GM12878 (cell line): ENCODE measurements at regions of chr7 and their contacts with region 1.

Region 1: GRCh38 chr7:129343099-129343700 is 91.0 kb upstream of the STRIP2 start:
- DNase-seq: no peak
- ATAC-seq: peak; percentile 84
- H3K4me3 ChIP-seq: no peak overlapping the region
- H3K27ac ChIP-seq: no peak overlapping the region
- H3K4me1 ChIP-seq: peaks cover 20% of the 10 kb centered on the region
- H3K27me3 ChIP-seq: no peaks in the 10 kb centered on the region
- CTCF ChIP-seq: peak; percentile 64 to 67 (median 65)
- EP300 ChIP-seq: no peak
- POLR2A ChIP-seq: no peak
- RAD21 ChIP-seq: peak; percentile 80

Region 2: GRCh38 chr7:129271500-129272355 is 71.5 kb before region 1 on chr7:
- CTCF ChIA-PET with region 1: no interaction called
- POLR2A ChIA-PET with region 1: no interaction called
- RAD21 ChIA-PET with region 1: no interaction called
- SMC1A ChIA-PET with region 1: no interaction called
- in situ Hi-C with region 1: no loop called
- intact Hi-C with region 1: no loop called
- DNase-seq: peak; percentile 21
- ATAC-seq: peak; percentile 98
- H3K4me3 ChIP-seq: no peak overlapping the region
- H3K27ac ChIP-seq: no peak overlapping the region
- H3K4me1 ChIP-seq: peaks cover 6% of the 10 kb centered on the region; the same call in 1 of the 2 replicates
- H3K27me3 ChIP-seq: no peaks in the 10 kb centered on the region
- CTCF ChIP-seq: peak; percentile 73 to 83 (median 74)
- EP300 ChIP-seq: no peak
- POLR2A ChIP-seq: no peak
- RAD21 ChIP-seq: peak; percentile 85

Region 3: GRCh38 chr7:129359638-129360037 is 16.4 kb after region 1 on chr7:
- CTCF ChIA-PET with region 1: interaction called, 27 read pairs
- POLR2A ChIA-PET with region 1: interaction called, 3 read pairs
- RAD21 ChIA-PET with region 1: interaction called, 22 read pairs
- SMC1A ChIA-PET with region 1: interaction called, 40 read pairs
- in situ Hi-C with region 1: no loop called
- intact Hi-C with region 1: no loop called
- DNase-seq: no peak
- ATAC-seq: no peak
- H3K4me3 ChIP-seq: no peak overlapping the region
- H3K27ac ChIP-seq: no peak overlapping the region
- H3K4me1 ChIP-seq: no peaks in the 10 kb centered on the region; the same call in none of the 2 replicates
- H3K27me3 ChIP-seq: no peaks in the 10 kb centered on the region
- CTCF ChIP-seq: no peak
- EP300 ChIP-seq: no peak
- POLR2A ChIP-seq: no peak
- RAD21 ChIP-seq: no peak

Region 4: GRCh38 chr7:129401967-129402860 is 59.0 kb after region 1 on chr7:
- CTCF ChIA-PET with region 1: interaction called, 14 read pairs
- POLR2A ChIA-PET with region 1: no interaction called
- RAD21 ChIA-PET with region 1: interaction called, 12 read pairs
- SMC1A ChIA-PET with region 1: interaction called, 9 read pairs
- in situ Hi-C with region 1: no loop called
- intact Hi-C with region 1: no loop called
- DNase-seq: peak; percentile 43
- ATAC-seq: peak; percentile 93
- H3K4me3 ChIP-seq: no peak overlapping the region
- H3K27ac ChIP-seq: peak overlapping the region; percentile 18; the same call in 1 of the 2 replicates
- H3K4me1 ChIP-seq: no peaks in the 10 kb centered on the region
- H3K27me3 ChIP-seq: no peaks in the 10 kb centered on the region
- CTCF ChIP-seq: peak; percentile 34 to 64 (median 37); a peak in 4 of 6 replicates
- EP300 ChIP-seq: peak; percentile 29 to 59; a peak in 2 of 4 replicates
- POLR2A ChIP-seq: no peak
- RAD21 ChIP-seq: peak; percentile 46

Region 5: DNA sequence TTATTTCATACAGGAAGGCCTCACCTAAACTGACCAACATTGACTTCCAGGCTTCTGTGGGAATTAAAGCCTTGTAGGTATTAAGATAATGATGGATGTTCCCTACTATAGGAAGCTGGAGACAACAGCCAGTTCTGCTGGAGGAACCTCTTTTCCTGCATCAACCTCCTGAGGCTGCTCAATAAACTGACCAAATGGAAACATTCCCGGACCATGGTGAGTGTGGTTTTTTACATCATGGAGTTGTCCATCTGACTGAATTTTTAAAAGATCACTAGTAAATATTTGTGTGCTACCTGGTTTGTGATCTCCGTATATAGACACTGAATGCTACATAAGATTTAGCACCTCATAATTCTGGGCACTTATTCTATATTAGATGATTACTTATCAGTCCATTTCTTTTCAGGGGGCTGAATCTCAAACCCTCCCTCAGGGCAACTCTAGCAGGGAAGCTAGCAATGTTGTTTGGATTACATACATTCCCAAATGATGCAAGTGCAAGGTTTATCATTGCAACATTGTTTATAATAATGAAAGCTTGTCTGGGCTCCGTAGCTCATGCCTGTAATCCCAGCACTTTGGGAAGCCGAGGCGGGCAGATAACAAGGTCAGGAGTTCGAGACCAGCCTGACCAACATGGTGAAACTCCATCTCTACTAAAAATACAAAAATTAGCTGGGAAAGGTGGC is 137.6 kb after region 1 on chr7:
- CTCF ChIA-PET with region 1: interaction called, 10 read pairs
- POLR2A ChIA-PET with region 1: no interaction called
- RAD21 ChIA-PET with region 1: interaction called, 4 read pairs
- SMC1A ChIA-PET with region 1: interaction called, 5 read pairs
- in situ Hi-C with region 1: no loop called
- intact Hi-C with region 1: no loop called
- DNase-seq: no peak
- ATAC-seq: no peak
- H3K4me3 ChIP-seq: no peak overlapping the region
- H3K27ac ChIP-seq: no peak overlapping the region
- H3K4me1 ChIP-seq: no peaks in the 10 kb centered on the region
- H3K27me3 ChIP-seq: no peaks in the 10 kb centered on the region
- CTCF ChIP-seq: no peak
- EP300 ChIP-seq: no peak
- POLR2A ChIP-seq: no peak
- RAD21 ChIP-seq: no peak

Region 6: GRCh38 chr7:129514683-129515082 is 171.5 kb after region 1 on chr7:
- CTCF ChIA-PET with region 1: no interaction called
- POLR2A ChIA-PET with region 1: no interaction called
- RAD21 ChIA-PET with region 1: no interaction called
- SMC1A ChIA-PET with region 1: no interaction called
- in situ Hi-C with region 1: no loop called
- intact Hi-C with region 1: no loop called
- DNase-seq: no peak
- ATAC-seq: no peak
- H3K4me3 ChIP-seq: no peak overlapping the region
- H3K27ac ChIP-seq: no peak overlapping the region
- H3K4me1 ChIP-seq: no peaks in the 10 kb centered on the region
- H3K27me3 ChIP-seq: no peaks in the 10 kb centered on the region
- CTCF ChIP-seq: no peak
- EP300 ChIP-seq: no peak
- POLR2A ChIP-seq: no peak
- RAD21 ChIP-seq: no peak

Region 7: DNA sequence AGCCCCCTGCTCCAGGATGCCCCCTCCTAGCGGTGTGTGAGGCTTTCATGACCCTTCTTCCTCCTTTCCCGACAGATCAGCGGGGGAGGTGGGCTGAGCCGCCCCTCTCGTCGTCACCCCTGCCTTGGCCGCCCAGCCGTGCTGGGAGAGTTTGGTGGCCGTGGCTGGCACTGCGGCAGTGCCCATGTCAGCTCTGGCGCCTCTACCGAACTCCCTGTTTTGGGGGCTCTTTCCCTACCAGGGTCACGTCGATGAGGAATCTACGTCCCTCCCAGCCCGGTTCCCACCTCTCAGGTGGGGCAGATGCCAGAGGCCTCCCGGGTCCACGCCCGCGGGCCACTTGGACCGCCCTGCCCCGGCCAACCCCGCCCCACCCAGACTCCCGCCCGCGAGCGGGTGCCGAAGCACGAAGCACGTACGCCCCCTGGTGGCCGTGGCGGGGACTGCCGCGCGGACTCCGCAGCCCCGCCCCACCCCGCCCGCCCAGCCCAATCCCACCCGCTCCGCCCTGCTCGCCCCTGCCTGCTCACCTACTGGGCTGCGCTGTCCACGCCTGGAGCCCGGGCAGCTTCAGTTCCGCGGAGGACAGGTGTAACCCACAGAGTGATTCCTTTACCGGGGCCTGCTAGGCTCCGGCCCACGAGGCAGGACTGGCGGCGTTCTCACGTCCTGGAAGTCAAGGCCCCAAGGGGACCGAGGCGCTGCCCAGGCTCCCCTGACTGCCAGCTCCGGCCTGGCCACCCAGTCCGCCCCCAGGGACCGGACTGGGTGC is 482.5 kb after region 1 on chr7:
- CTCF ChIA-PET with region 1: interaction called, 11 read pairs
- POLR2A ChIA-PET with region 1: no interaction called
- RAD21 ChIA-PET with region 1: interaction called, 7 read pairs
- SMC1A ChIA-PET with region 1: interaction called, 4 read pairs
- in situ Hi-C with region 1: no loop called
- intact Hi-C with region 1: no loop called
- DNase-seq: no peak
- ATAC-seq: peak; percentile 88
- H3K4me3 ChIP-seq: peak overlapping the region; percentile 79
- H3K27ac ChIP-seq: no peak overlapping the region
- H3K4me1 ChIP-seq: peaks cover 4% of the 10 kb centered on the region
- H3K27me3 ChIP-seq: no peaks in the 10 kb centered on the region
- CTCF ChIP-seq: peak; percentile 37 to 72 (median 70); a peak in 4 of 6 replicates
- EP300 ChIP-seq: no peak
- POLR2A ChIP-seq: peak; percentile 61; the same call in 1 of the 2 replicates
- RAD21 ChIP-seq: peak; percentile 77